Aorta (tissue), 5 donors: ENCODE measurements at regions of chr11 and their contacts with region 1.

Region 1: GRCh38 chr11:75031771-75032549 is 43.2 kb downstream of the NEU3 start:
- DNase-seq: peak; percentile 79 to 91
- ATAC-seq: peak; percentile 55
- H3K4me3 ChIP-seq: no peak overlapping the region
- H3K27ac ChIP-seq: no peak overlapping the region
- H3K4me1 ChIP-seq: no peaks in the 10 kb centered on the region
- H3K27me3 ChIP-seq: no peaks in the 10 kb centered on the region

Region 2: GRCh38 chr11:74929431-74930363 is 102.3 kb before region 1 on chr11:
- intact Hi-C with region 1: loop called (anchors 2 kb)
- DNase-seq: peak in 1 of 2 donors; percentile 66
- ATAC-seq: peak; percentile 78
- H3K4me3 ChIP-seq: no peak overlapping the region
- H3K27ac ChIP-seq: no peak overlapping the region
- H3K4me1 ChIP-seq: no peaks in the 10 kb centered on the region
- H3K27me3 ChIP-seq: no peaks in the 10 kb centered on the region

Region 3: GRCh38 chr11:75465701-75466531 is 434.0 kb after region 1 on chr11:
- intact Hi-C with region 1: no loop called
- DNase-seq: peak in 1 of 2 donors; percentile 71
- ATAC-seq: no peak
- H3K4me3 ChIP-seq: no peak overlapping the region
- H3K27ac ChIP-seq: no peak overlapping the region
- H3K4me1 ChIP-seq: no peaks in the 10 kb centered on the region
- H3K27me3 ChIP-seq: no peaks in the 10 kb centered on the region